Breast epithelium (tissue), 4 donors: ENCODE measurements at regions of chr6 and their contacts with region 1.

Region 1: GRCh38 chr6:126388104-126388598 is 48.2 kb downstream of the CENPW start:
- DNase-seq: no peak
- H3K4me3 ChIP-seq: no peak overlapping the region
- H3K27ac ChIP-seq: no peak overlapping the region
- H3K4me1 ChIP-seq: no peaks in the 10 kb centered on the region
- H3K27me3 ChIP-seq: no peaks in the 10 kb centered on the region
- CTCF ChIP-seq: no peak
- POLR2A ChIP-seq: no peak

Region 2: GRCh38 chr6:124772733-124773319 is 1615.3 kb before region 1 on chr6:
- intact Hi-C with region 1: no loop called
- DNase-seq: no peak
- H3K4me3 ChIP-seq: no peak overlapping the region
- H3K27ac ChIP-seq: no peak overlapping the region
- H3K4me1 ChIP-seq: no peaks in the 10 kb centered on the region
- H3K27me3 ChIP-seq: no peaks in the 10 kb centered on the region
- CTCF ChIP-seq: no peak
- POLR2A ChIP-seq: no peak

Region 3: DNA sequence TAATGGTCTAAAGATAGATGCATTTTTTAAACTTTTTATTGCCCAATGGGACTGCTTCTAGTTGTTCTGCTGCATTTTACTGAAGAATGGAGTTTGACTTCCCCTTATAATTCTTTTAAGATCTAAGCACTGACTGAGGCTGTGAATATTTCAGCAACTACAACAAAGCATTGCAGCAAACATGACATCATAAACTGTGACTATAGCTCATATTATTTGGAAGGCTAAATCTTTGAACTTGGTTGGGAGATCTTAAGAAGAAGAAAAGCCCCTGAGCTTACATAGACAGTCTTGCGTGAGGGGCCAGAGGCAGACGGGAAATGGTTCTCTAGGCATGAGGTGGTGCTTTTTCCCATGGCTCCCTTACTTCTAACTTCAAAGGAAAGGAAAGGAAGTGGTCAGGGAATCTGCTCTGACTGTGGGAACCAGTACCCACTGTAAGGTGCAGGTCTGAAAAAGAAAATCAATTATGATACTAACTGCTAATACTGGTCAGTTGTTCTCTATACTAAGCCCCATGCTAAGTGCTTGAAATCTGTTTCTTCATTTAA is 624.0 kb before region 1 on chr6:
- intact Hi-C with region 1: loop called (anchors 5 kb)
- DNase-seq: no peak
- H3K4me3 ChIP-seq: no peak overlapping the region
- H3K27ac ChIP-seq: no peak overlapping the region
- H3K4me1 ChIP-seq: no peaks in the 10 kb centered on the region
- H3K27me3 ChIP-seq: no peaks in the 10 kb centered on the region
- CTCF ChIP-seq: no peak
- POLR2A ChIP-seq: no peak